PC-3 (cell line): ENCODE measurements at regions of chr1 and their contacts with region 1.

Region 1: DNA sequence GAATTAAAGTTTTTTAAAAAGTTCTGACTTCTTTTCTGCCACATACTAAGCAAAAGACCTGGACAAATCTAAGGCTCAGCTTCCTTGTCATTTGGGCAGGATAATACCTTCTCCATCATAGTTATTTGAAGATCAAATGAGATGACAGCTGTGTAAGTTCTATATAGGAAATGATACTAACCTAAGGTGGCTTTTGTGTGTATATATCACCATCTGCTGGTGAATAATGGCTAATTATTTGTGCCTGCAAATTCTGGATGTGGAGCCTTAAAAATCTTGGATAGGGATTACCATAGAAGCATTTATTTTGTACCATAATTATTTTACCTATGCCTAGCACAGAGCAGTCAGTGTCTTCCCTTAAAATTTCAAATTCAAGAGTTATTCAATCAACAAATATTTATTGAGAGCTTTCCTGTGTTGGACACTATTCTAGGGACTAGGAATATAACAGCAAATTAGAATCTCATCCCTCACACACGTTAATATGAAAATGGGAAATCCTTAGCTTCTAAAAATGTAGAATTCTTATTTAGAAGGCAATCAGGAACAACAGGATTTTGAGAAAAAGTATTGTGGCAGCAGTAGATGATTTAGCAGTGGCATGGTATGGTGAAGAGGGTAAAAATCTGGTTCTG is 89.8 kb downstream of the TMEM200B start:
- DNase-seq: peak; percentile 66
- ATAC-seq: peak; percentile 37
- H3K4me3 ChIP-seq: no peak overlapping the region
- H3K27ac ChIP-seq: no peak overlapping the region
- H3K4me1 ChIP-seq: no peaks in the 10 kb centered on the region
- H3K27me3 ChIP-seq: no peaks in the 10 kb centered on the region
- CTCF ChIP-seq: peak; percentile 87

Region 2: DNA sequence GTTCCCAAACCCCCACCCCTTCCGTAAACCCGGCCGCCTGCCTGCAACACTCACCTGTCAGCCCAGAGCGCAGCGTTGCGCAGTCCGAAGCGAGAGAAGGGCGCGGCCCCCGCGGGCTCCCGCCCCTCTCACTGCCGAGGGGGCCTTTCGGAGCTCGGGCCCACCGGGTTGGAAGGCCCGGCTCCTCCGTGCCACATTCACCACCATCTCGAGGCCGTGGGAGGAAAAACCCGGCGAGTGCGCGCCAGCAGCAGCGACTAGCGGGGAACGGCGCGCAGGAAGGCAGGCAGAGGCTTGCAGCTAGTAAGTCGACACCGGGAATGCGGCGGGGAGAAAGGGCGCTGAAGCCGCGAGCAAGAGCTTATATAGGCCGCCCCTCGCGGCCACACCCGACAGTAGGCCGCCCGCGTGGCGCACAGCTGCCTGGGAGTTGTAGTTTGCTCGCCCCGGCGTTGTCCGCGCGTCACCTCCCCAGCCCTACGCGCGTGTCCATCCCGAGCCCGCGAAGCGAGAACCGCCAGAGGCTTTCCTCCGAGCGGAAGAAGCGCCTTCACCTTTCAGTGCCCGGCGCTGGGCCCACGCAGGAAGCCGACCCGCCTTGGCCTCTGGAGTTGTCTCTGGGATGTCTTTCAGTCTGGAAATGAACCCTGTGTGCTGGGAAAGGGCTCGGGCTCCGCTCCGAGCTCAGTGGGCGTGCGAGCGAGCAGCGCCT is 452.3 kb before region 1 on chr1:
- CTCF ChIA-PET with region 1: no interaction called
- POLR2A ChIA-PET with region 1: interaction called, 17 read pairs
- intact Hi-C with region 1: no loop called
- DNase-seq: peak; percentile 95
- ATAC-seq: peak; percentile 94
- H3K4me3 ChIP-seq: peak overlapping the region; percentile 99
- H3K27ac ChIP-seq: peak overlapping the region; percentile 66
- H3K4me1 ChIP-seq: peaks cover 15% of the 10 kb centered on the region
- H3K27me3 ChIP-seq: no peaks in the 10 kb centered on the region
- CTCF ChIP-seq: 0 out of 2 replicates have a peak, but pooled peaks have one; percentile 7

Region 3: GRCh38 chr1:28792644-28793121 is 241.3 kb before region 1 on chr1:
- CTCF ChIA-PET with region 1: no interaction called
- POLR2A ChIA-PET with region 1: no interaction called
- intact Hi-C with region 1: loop called (anchors 5 kb)
- DNase-seq: no peak
- ATAC-seq: no peak
- H3K4me3 ChIP-seq: no peak overlapping the region
- H3K27ac ChIP-seq: no peak overlapping the region
- H3K4me1 ChIP-seq: no peaks in the 10 kb centered on the region
- H3K27me3 ChIP-seq: no peaks in the 10 kb centered on the region
- CTCF ChIP-seq: peak; percentile 30; the same call in 1 of the 2 replicates

Region 4: GRCh38 chr1:28835237-28835650 is 198.7 kb before region 1 on chr1:
- CTCF ChIA-PET with region 1: no interaction called
- POLR2A ChIA-PET with region 1: no interaction called
- intact Hi-C with region 1: no loop called
- DNase-seq: no peak
- ATAC-seq: no peak
- H3K4me3 ChIP-seq: no peak overlapping the region
- H3K27ac ChIP-seq: no peak overlapping the region
- H3K4me1 ChIP-seq: no peaks in the 10 kb centered on the region
- H3K27me3 ChIP-seq: no peaks in the 10 kb centered on the region
- CTCF ChIP-seq: no peak

Region 5: GRCh38 chr1:28914228-28915030 is 119.5 kb before region 1 on chr1 and contains the start of gene EPB41:
- CTCF ChIA-PET with region 1: no interaction called
- POLR2A ChIA-PET with region 1: no interaction called
- intact Hi-C with region 1: loop called (anchors 1 kb)
- DNase-seq: peak; percentile 92
- ATAC-seq: peak; percentile 88
- H3K4me3 ChIP-seq: peak within 1 kb of the TSS; percentile 75
- H3K27ac ChIP-seq: peak within 1 kb of the TSS; percentile 28
- H3K4me1 ChIP-seq: peaks cover 14% of the 10 kb centered on the region
- H3K27me3 ChIP-seq: no peaks in the 10 kb centered on the region
- CTCF ChIP-seq: no peak
- total RNA-seq, gene EPB41: 41.5 and 44.9 TPM in 2 replicates

Region 6: DNA sequence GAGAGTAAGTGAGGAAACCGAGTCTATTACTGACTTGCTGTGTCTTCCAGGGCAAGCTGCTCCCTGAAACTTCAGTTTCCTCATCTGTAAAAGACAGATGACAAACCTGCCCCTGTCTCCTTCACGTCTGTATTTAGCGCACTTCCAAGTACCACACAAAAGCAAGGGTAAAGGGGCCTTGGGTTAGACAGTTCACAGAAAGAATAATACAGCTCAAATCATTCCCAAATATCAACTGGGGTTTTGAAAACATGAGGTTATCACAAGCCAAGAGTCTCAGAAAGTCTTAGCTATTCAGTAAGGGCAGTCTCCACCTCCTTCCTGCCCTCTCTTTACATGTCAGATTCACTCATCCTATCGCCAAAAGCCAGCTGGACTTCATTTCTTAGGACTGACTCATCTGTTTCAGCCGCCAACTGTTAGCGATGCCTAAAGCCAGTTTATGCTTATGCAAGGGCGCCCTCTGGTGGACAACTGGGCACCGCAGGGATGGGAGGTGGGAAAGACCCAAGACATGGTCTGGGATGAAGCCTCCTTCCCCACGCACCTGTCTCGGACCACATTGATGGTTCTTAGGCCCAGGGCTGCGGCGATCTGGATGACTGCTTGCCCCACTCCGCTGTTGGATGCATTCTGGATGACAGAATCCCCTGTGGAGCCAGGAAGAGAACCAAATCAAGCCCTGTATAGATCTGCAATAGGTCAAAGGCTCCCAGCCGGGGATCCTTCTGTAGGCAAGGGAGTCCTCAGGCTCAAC is 168.8 kb after region 1 on chr1:
- CTCF ChIA-PET with region 1: interaction called, 5 read pairs
- POLR2A ChIA-PET with region 1: interaction called, 3 read pairs
- intact Hi-C with region 1: loop called (anchors 2 kb)
- DNase-seq: peak; percentile 99
- ATAC-seq: peak; percentile 96
- H3K4me3 ChIP-seq: peak overlapping the region; percentile 36; the same call in 1 of the 2 replicates
- H3K27ac ChIP-seq: peak overlapping the region; percentile 42
- H3K4me1 ChIP-seq: peaks cover 17% of the 10 kb centered on the region
- H3K27me3 ChIP-seq: no peaks in the 10 kb centered on the region
- CTCF ChIP-seq: peak; percentile 96